Activated naive CD4-positive, alpha-beta T cell treated with anti-CD3 and anti-CD28 coated beads for 36 hours (primary cell): ENCODE measurements at regions of chr7 and their contacts with region 1.

Region 1: DNA sequence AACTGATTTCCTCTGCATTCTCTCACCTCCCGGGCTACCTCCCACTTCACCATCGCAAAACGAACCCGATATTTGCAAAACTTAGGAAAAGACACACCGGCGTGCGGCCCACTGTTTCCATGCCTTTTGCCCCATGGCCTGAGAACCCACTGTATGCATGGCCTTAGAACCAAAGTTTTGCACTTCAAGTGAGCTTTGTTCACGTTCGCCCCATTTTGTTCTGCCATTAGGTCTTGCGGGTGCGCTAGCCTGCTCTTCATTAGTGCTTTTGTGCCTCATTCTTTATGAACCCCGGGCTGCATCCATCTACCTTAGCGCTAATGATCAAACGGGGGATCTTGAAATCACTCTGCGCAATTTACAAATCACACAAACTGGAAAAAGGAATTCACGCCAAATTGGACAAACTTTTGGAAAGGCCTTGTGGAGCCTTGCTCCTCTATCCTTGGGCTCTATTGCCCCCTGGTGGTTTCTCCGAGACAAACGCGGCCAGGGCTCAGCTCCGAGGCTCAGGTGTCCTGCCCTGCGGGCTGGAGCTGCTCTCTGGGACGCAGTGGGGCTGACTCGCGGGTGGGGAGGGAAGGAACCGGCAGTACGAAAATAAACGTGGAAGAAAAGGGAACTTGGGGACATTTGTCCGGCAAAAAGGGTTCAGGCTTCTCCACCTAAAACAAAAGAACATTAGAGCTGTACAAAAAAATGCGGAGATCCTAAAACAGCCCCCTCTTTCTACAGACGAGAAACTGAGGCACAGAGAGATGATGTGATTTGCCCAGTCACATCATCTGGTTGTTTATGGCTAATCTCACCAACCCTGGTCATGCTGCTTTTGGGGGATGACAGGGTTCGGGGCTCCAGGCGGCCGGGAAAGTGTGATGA is 300.4 kb upstream of the NFE2L3 start:
- DNase-seq: peak; percentile 85
- H3K4me3 Mint-ChIP-seq: peak overlapping the region; percentile 51
- H3K27ac Mint-ChIP-seq: no peak overlapping the region
- H3K4me1 Mint-ChIP-seq: peaks cover 19% of the 10 kb centered on the region
- H3K27me3 Mint-ChIP-seq: peaks cover 37% of the 10 kb centered on the region

Region 2: DNA sequence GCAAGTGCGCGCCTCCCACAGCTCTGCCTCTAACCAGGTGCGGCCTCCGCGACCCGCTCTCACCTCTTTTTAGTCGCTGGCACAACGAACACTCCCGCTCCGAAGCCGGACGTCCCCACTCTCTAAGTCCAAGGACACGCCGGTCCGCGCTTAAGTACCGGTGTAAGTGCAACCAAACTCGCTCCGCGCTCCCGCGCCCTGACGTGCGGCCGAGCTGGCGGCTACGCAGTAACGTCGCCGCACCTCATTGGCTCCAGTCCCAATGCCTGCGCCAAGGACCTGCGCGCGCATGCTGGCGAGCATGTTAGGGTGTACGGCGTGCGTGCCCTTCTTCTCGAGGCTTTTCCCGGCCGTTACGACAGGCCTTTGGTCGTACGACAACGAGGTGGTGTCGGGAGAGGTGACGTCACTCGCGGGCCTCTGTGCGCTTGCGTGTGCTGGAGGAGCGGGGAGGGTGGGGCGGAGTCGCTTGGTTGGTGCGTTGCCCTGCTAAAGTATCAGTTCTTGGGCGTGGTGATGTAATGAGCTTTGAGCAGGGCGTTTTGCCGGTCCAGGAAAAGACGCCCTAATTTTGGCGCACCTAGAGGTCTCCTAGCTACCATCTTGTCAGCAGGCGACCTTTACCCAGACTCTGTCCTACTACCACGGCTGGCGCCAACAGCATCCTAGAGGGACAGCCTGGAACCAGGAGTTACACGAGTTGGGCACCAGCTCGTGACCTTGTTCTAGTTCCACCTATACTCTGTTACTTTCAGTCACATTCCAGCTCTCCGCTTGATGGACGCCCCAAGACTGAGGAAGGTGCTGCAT is 726.2 kb before region 1 on chr7 and contains the start of gene CYCS:
- CTCF ChIA-PET with region 1: no interaction called
- intact Hi-C with region 1: loop called (anchors 2 kb)
- DNase-seq: peak; percentile 100
- H3K4me3 Mint-ChIP-seq: peak within 1 kb of the TSS; percentile 93
- H3K27ac Mint-ChIP-seq: peak within 1 kb of the TSS; percentile 98
- H3K4me1 Mint-ChIP-seq: peaks cover 31% of the 10 kb centered on the region
- H3K27me3 Mint-ChIP-seq: no peaks in the 10 kb centered on the region
- total RNA-seq, gene CYCS: 213 to 224 TPM

Region 3: DNA sequence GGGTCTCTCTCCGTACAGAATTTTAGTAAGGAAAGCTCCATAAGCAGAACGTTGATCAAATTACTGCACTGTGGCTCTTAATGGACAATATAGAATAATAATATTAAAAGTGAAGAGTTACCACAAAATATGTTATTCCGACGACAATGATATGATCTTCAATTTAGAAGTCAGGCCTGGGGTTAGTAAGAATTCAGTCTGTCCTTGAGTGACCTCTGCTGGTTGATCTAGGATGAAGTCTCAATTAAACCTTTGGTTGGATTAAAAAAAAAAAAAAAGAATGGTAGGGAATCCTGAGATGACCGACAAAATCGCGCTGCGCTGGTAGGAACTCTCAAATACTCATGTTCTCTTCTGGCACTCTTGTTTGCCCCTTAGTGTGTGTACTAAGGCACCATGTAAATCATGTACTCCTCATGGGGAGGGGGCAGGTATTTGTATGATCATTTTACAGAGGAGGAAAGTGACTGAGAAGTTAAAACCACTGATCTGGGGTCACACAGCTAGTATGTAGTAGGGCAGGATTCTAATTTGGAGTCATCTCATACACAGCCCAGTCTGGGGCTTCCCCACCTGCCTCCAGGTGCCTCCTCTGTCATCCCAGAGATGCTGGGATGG is 462.0 kb before region 1 on chr7:
- CTCF ChIA-PET with region 1: interaction called, 5 read pairs
- intact Hi-C with region 1: loop called (anchors 1 kb)
- DNase-seq: peak; percentile 21
- H3K4me3 Mint-ChIP-seq: no peak overlapping the region
- H3K27ac Mint-ChIP-seq: no peak overlapping the region
- H3K4me1 Mint-ChIP-seq: peaks cover 3% of the 10 kb centered on the region
- H3K27me3 Mint-ChIP-seq: peaks cover 2% of the 10 kb centered on the region

Region 4: GRCh38 chr7:25600262-25600920 is 251.2 kb before region 1 on chr7:
- CTCF ChIA-PET with region 1: no interaction called
- intact Hi-C with region 1: loop called (anchors 5 kb)
- DNase-seq: no peak
- H3K4me3 Mint-ChIP-seq: no peak overlapping the region
- H3K27ac Mint-ChIP-seq: no peak overlapping the region
- H3K4me1 Mint-ChIP-seq: peaks cover 4% of the 10 kb centered on the region
- H3K27me3 Mint-ChIP-seq: no peaks in the 10 kb centered on the region

Region 5: DNA sequence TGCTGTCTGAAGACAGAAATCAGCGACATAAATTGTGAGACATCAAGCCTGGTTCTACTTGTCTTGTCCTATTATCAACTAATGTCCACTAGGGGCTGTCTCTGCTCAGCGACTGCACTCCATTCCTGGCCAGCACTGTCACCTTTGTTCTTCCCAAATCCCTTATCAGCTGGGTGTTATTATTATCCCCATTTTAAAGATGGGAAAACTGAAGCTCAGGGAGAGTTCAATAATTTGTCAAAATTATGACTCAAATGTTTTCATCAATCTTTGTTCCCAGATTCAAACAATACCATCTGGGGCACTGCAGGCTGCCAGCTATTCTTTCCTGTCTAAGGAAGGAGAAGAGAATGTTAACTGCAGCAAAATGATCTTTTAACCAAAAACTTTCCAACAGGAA is 131.1 kb before region 1 on chr7:
- CTCF ChIA-PET with region 1: interaction called, 3 read pairs
- intact Hi-C with region 1: loop called (anchors 5 kb)
- DNase-seq: no peak
- H3K4me3 Mint-ChIP-seq: no peak overlapping the region
- H3K27ac Mint-ChIP-seq: no peak overlapping the region
- H3K4me1 Mint-ChIP-seq: no peaks in the 10 kb centered on the region
- H3K27me3 Mint-ChIP-seq: peaks cover 9% of the 10 kb centered on the region

Region 6: DNA sequence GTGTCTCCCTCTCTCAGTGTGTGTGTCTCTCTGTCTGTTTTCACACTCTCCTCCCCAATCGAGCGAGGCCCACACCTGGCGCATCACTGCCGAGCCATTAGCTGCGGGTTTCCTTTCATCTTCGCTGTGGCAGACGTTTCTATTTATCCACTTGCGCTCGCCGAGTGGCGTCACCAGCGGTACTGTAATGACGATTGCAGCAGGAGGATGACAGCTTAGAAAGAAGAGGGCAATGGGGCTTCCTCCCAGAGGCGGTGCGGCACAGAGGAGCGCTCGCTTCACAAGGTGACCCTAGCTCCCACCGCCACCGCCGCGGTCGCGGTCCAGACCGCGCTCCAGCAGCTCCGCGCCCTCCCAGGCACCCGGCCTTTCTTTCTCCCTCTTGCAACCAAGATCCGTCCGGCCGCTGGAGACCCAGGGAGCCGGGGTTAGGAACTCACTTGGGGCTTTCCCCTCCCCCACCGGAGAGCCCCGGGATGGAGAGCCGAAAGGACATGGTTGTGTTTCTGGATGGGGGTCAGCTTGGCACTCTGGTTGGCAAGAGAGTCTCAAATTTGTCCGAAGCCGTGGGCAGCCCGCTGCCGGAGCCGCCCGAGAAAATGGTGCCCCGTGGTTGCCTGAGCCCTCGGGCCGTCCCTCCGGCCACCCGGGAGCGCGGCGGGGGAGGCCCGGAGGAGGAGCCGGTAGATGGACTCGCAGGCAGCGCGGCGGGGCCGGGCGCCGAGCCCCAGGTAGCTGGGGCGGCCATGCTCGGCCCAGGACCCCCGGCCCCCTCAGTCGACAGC is 1391.2 kb after region 1 on chr7 and contains the start of gene EVX1:
- CTCF ChIA-PET with region 1: no interaction called
- intact Hi-C with region 1: loop called (anchors 5 kb)
- DNase-seq: peak; percentile 78
- H3K4me3 Mint-ChIP-seq: peak within 1 kb of the TSS; percentile 58
- H3K27ac Mint-ChIP-seq: no peak within 1 kb of the TSS
- H3K4me1 Mint-ChIP-seq: peaks cover 25% of the 10 kb centered on the region
- H3K27me3 Mint-ChIP-seq: peaks cover 79% of the 10 kb centered on the region
- total RNA-seq, gene EVX1: not detected